Body of pancreas (tissue), 4 donors: ENCODE measurements at regions of chr16 and their contacts with region 1.

Region 1: DNA sequence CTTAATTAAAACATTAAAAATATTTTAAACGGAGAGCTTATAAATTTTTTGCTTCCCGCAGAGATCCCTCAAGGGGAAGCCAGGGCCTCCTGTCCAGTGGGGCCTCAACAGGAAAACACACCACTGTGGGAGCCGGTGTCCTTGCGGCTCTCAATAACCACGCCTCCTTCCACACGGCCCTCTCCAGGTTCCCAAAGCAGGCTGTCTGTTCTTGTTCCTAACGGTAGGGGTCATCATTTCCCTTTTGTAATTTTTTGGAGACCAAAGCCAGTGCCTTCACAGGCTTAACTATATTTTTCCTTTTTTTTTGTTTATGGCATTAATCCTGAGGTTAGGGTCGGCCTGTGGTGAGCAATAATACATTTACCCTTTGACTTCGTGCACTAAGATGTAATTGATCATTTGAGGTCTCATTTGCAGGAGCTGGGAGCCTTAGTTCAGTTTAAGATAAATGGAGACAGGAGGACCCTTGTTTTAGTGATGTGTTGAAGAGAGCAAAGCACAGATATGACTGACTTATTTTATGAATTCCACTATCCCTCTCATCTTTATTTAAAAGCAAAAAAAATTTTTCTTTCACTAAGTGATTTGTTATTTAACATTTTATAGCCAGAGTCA is 77.5 kb upstream of the N4BP1 start:
- DNase-seq: peak; percentile 44 to 63 (median 58)
- ATAC-seq: peak; percentile 68
- H3K4me3 ChIP-seq: no peak overlapping the region
- H3K27ac ChIP-seq: no peak overlapping the region
- H3K4me1 ChIP-seq: no peaks in the 10 kb centered on the region
- H3K27me3 ChIP-seq: no peaks in the 10 kb centered on the region
- CTCF ChIP-seq: peak; percentile 30 to 68 (median 65)
- POLR2A ChIP-seq: no peak

Region 2: DNA sequence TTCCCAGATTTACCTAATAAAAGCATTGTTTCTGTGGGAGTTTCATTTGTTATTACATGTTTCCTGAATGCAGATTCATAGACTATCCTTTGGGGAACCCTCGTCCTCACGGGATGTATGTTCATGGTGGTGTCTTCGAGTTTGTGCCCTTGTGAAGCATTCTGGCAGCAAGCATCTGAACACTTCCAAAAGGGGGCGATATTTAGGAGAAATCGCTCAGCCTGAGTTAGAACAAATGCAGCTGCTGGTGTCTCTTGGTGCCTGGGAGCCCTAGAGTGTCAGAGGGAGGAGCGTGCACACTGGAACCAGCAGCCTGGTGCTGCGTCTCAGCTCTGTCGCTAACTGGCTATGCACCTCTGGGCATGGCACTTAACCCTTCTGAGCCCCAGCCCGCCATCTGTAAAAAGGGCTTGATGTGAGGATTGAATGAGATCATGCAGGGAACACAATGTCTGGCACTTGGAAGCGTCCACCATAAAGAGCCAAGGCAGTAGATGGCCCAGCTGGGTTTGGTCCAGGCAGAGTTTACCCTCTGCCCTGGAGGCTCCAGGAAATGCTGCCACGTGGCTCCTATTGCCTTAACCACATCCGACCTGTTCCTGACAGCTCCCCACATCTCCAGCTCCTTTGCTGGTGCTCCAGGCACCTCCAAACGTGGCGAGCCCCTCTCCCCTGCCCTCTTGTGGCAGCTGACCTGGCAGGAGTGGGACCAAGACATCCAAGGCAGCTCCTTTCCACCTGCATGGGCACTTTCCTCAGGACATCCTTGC is 661.1 kb after region 1 on chr16:
- intact Hi-C with region 1: loop called (anchors 5 kb)
- DNase-seq: no peak
- ATAC-seq: no peak
- H3K4me3 ChIP-seq: no peak overlapping the region
- H3K27ac ChIP-seq: no peak overlapping the region
- H3K4me1 ChIP-seq: no peaks in the 10 kb centered on the region
- H3K27me3 ChIP-seq: no peaks in the 10 kb centered on the region
- CTCF ChIP-seq: no peak
- POLR2A ChIP-seq: no peak